Activated CD4-positive, alpha-beta memory T cell treated with anti-CD3 and anti-CD28 coated beads, Interleukin-2, amount 10 ng/mL, durations not matched to agents 7 days and 5 days (primary cell): ENCODE measurements at regions of chr17 and their contacts with region 1.

Region 1: DNA sequence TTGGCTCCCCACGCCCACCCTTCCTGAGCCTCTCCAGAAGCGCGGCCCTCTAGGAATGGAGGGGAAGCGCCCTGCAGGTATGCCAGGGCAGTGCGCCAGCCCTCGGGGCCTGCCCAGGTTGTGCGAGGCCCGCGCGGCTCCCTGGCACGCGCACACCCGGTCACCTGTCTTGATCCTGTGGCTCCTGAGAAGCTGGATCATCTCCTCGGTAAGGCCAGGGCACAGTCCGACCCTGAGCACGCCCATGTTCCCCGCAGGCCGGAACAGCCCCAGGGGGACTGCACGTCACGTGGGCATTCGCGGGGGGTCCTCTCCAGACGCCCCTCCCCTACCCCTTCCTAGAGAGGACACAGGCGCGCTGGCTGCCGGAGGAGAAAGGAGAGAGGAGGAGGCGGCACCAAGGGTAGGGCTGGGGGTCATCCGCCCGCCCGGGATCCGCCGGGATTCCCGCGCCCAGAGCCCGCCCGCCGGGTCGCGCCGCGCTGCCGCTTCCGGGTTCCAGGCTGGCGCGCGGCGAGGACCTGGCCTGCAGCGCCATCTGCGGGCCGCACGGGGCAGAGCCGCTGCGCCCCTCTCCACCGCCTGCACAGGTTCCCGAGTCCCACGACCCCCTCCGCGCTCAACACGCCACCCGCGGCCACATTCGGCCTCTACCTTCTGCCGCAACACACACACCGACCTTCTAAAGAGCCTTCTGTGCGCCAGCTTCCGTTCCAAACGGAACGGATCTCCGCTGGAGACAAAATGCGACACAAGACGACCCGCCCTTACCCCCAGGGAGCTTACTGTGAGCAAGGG is at the start of gene RAD51D:
- DNase-seq: peak; percentile 83
- H3K4me3 Mint-ChIP-seq: peak within 1 kb of the TSS; percentile 79
- H3K27ac Mint-ChIP-seq: peak within 1 kb of the TSS; percentile 78
- H3K4me1 Mint-ChIP-seq: peaks cover 41% of the 10 kb centered on the region
- H3K27me3 Mint-ChIP-seq: no peaks in the 10 kb centered on the region
- total RNA-seq, gene RAD51D: 25.6 to 25.9 TPM

Region 2: DNA sequence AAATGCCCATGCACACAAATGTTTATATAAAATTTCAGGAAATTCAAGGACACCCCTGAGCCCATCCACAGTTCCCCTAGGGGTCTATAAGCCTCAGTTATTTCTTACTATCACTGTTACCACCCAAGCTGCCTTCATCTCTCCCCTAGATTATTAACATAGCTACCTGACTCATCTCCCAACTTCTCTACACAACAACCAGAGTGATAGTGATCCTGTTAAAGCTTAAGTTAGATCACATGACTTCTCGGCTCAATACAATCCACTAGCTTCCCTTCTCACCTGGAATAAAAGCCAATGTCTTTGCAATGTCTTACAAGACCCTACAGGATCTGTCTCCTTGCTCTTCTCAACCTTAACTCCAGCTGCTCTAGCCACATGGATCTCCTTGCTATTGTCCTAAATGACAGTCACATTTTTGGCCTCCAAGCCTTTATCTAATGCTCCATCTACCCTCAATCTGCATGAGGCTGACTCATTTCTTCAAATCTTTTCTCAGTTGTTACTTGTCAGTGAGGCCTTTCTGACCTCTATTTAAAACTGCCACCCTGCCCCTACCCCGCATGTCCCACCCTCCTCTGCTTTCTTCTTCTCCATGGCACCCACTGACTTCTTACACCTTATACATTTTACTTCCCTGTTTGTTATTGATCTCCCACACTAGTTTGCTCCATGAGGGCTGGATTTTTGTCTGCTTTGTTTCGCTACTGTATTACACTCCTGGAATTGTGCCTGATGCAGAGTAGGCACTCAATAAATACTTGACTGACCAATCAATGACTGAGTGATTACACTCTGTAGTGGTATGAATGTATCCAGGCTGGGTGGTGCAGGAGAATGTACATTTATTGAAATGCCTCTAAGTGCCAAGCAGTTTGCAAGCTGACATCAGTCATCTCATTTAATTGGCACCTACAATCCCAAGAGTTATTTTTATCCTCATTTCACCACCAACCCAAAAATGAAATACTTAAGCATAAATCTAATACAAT is 144.5 kb before region 1 on chr17:
- CTCF ChIA-PET with region 1: interaction called, 18 read pairs
- POLR2A ChIA-PET with region 1: interaction called, 21 read pairs
- DNase-seq: peak; percentile 26
- H3K4me3 Mint-ChIP-seq: peak overlapping the region; percentile 21
- H3K27ac Mint-ChIP-seq: peak overlapping the region; percentile 80
- H3K4me1 Mint-ChIP-seq: peaks cover 46% of the 10 kb centered on the region
- H3K27me3 Mint-ChIP-seq: no peaks in the 10 kb centered on the region

Region 3: GRCh38 chr17:34998205-34998604 is 121.4 kb before region 1 on chr17:
- CTCF ChIA-PET with region 1: interaction called, 123 read pairs
- POLR2A ChIA-PET with region 1: interaction called, 29 read pairs
- DNase-seq: peak; percentile 87
- H3K4me3 Mint-ChIP-seq: no peak overlapping the region
- H3K27ac Mint-ChIP-seq: peak overlapping the region; percentile 65
- H3K4me1 Mint-ChIP-seq: peaks cover 9% of the 10 kb centered on the region
- H3K27me3 Mint-ChIP-seq: no peaks in the 10 kb centered on the region

Region 4: GRCh38 chr17:35082073-35082657 is 37.4 kb before region 1 on chr17:
- CTCF ChIA-PET with region 1: interaction called, 17 read pairs
- POLR2A ChIA-PET with region 1: interaction called, 13 read pairs
- DNase-seq: no peak
- H3K4me3 Mint-ChIP-seq: peak overlapping the region; percentile 34
- H3K27ac Mint-ChIP-seq: peak overlapping the region; percentile 87
- H3K4me1 Mint-ChIP-seq: peaks cover 85% of the 10 kb centered on the region
- H3K27me3 Mint-ChIP-seq: no peaks in the 10 kb centered on the region

Region 5: GRCh38 chr17:35141681-35142466 is 22.3 kb after region 1 on chr17 and contains the start of gene NLE1:
- CTCF ChIA-PET with region 1: interaction called, 14 read pairs
- POLR2A ChIA-PET with region 1: interaction called, 3 read pairs
- DNase-seq: peak; percentile 89
- H3K4me3 Mint-ChIP-seq: peak within 1 kb of the TSS; percentile 77
- H3K27ac Mint-ChIP-seq: peak within 1 kb of the TSS; percentile 65
- H3K4me1 Mint-ChIP-seq: peaks cover 30% of the 10 kb centered on the region
- H3K27me3 Mint-ChIP-seq: no peaks in the 10 kb centered on the region
- total RNA-seq, gene NLE1: 13.4 to 14.0 TPM

Region 6: DNA sequence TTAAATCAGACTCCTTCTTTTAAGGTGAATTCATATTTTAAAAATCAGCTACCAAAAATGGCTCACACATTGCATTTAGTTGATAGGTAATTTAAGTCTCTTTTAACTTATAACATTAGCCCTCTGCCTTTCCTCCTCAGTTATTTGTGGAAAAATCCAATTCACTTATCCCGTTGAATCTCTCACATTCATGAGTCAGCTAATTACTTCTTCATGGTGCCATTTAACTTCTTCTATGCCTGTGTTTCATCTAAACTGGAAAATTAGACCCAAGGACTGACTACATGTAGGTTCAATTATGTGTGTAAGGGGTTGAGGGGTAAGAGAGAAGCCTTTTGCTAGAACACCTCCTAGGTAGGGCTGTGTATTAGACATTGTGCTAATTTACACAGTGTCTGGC is 104.9 kb after region 1 on chr17:
- CTCF ChIA-PET with region 1: no interaction called
- POLR2A ChIA-PET with region 1: no interaction called
- DNase-seq: no peak
- H3K4me3 Mint-ChIP-seq: no peak overlapping the region
- H3K27ac Mint-ChIP-seq: no peak overlapping the region
- H3K4me1 Mint-ChIP-seq: peaks cover 12% of the 10 kb centered on the region
- H3K27me3 Mint-ChIP-seq: no peaks in the 10 kb centered on the region

Region 7: GRCh38 chr17:35299129-35299528 is 179.6 kb after region 1 on chr17:
- CTCF ChIA-PET with region 1: no interaction called
- POLR2A ChIA-PET with region 1: no interaction called
- DNase-seq: no peak
- H3K4me3 Mint-ChIP-seq: no peak overlapping the region
- H3K27ac Mint-ChIP-seq: no peak overlapping the region
- H3K4me1 Mint-ChIP-seq: peaks cover 3% of the 10 kb centered on the region
- H3K27me3 Mint-ChIP-seq: peaks cover 21% of the 10 kb centered on the region